Activated T-helper 1 cell treated with anti-CD3 and anti-CD28 coated beads, Interleukin-12 subunit alpha, Interleukin-12 subunit beta, Interleukin-2, Interleukin-4 antibody, amounts not matched to agents 30 ng/mL and 10 ng/mL and 1 ng/mL, durations not matched to agents 14 hours and 24 hours and 36 hours (primary cell): ENCODE measurements at regions of chr10 and their contacts with region 1.

Region 1: GRCh38 chr10:17001961-17002749 is 127.5 kb downstream of the CUBN start:
- DNase-seq: peak; percentile 42
- H3K4me3 Mint-ChIP-seq: peak overlapping the region; percentile 64
- H3K27ac Mint-ChIP-seq: peak overlapping the region; percentile 98
- H3K4me1 Mint-ChIP-seq: peaks cover 43% of the 10 kb centered on the region
- H3K27me3 Mint-ChIP-seq: peaks cover 49% of the 10 kb centered on the region

Region 2: DNA sequence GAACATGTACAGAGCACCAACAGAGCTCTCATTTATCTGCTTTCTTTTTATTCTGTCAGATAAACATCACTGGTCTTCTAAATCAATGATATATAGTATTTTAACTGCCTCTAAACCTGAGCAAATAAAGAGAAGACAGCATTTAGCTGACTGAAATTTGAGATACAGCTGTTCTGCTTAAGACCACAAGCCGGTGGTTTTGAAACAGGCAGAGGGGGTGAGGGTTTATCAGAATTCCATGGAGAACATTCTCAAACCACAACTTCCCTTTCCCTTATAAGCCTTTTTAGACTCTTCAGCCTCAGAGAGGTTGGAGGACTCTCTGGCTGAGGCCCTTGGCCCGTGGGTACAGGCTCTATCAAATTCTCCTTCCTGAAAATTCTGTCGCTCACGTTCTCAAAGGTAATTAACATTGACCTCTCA is 97.5 kb before region 1 on chr10:
- intact Hi-C with region 1: loop called (anchors 1 kb)
- DNase-seq: no peak
- H3K4me3 Mint-ChIP-seq: no peak overlapping the region
- H3K27ac Mint-ChIP-seq: no peak overlapping the region
- H3K4me1 Mint-ChIP-seq: peaks cover 9% of the 10 kb centered on the region
- H3K27me3 Mint-ChIP-seq: peaks cover 7% of the 10 kb centered on the region

Region 3: DNA sequence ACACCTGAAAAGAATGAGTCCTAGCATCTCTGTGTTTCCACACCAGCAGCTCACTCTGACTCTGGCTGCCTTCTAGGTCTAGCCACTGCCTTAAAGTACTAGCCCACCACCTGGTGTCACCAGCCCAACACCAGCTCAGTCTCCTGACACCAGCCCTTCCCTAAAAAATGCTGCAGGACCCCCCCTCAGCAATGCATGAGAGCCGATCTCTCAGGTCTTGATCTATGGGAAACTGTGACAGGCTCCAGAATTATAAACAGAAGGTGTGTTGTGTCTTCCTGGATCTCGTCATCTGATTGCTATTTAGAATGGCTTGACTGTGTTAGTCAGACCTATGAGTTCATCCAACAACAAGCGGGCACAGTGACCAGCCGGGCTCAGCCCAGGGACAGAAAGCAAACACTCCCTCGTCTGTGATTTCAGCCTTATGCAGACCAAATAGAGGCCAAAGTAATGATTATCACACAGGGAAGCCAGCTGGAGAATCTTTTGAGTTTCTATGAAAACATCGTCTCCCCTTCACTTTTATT is 60.9 kb after region 1 on chr10:
- intact Hi-C with region 1: loop called (anchors 2 kb)
- DNase-seq: no peak
- H3K4me3 Mint-ChIP-seq: no peak overlapping the region
- H3K27ac Mint-ChIP-seq: no peak overlapping the region
- H3K4me1 Mint-ChIP-seq: peaks cover 42% of the 10 kb centered on the region
- H3K27me3 Mint-ChIP-seq: peaks cover 17% of the 10 kb centered on the region

Region 4: GRCh38 chr10:17200912-17201793 is 199.0 kb after region 1 on chr10 and contains the start of gene TRDMT1:
- intact Hi-C with region 1: loop called (anchors 1 kb)
- DNase-seq: peak; percentile 78
- H3K4me3 Mint-ChIP-seq: peak within 1 kb of the TSS; percentile 84
- H3K27ac Mint-ChIP-seq: peak within 1 kb of the TSS; percentile 77
- H3K4me1 Mint-ChIP-seq: peaks cover 27% of the 10 kb centered on the region
- H3K27me3 Mint-ChIP-seq: peaks cover 2% of the 10 kb centered on the region
- total RNA-seq, gene TRDMT1: 3.3 and 4.2 TPM in 2 replicates

Region 5: GRCh38 chr10:17512341-17513001 is 510.3 kb after region 1 on chr10:
- intact Hi-C with region 1: loop called (anchors 5 kb)
- DNase-seq: no peak
- H3K4me3 Mint-ChIP-seq: peak overlapping the region; percentile 22
- H3K27ac Mint-ChIP-seq: peak overlapping the region; percentile 40
- H3K4me1 Mint-ChIP-seq: peaks cover 36% of the 10 kb centered on the region
- H3K27me3 Mint-ChIP-seq: peaks cover 2% of the 10 kb centered on the region